ENCODE measurements at regions of chr15 and their contacts with region 1.

Region 1: GRCh38 chr15:51137880-51138430 is 43.2 kb upstream of the TNFAIP8L3 start:
- DNase-seq: no peak
- H3K4me3 ChIP-seq: no peak overlapping the region
- H3K27ac ChIP-seq: no peak overlapping the region
- H3K27me3 ChIP-seq: peaks cover 7% of the 10 kb centered on the region
- CTCF ChIP-seq: no peak

Region 2: GRCh38 chr15:51080286-51080685 is 57.7 kb before region 1 on chr15:
- CTCF ChIA-PET with region 1: interaction called, 7 read pairs
- POLR2A ChIA-PET with region 1: interaction called, 11 read pairs
- DNase-seq: no peak
- H3K4me3 ChIP-seq: no peak overlapping the region
- H3K27ac ChIP-seq: no peak overlapping the region
- H3K27me3 ChIP-seq: no peaks in the 10 kb centered on the region
- CTCF ChIP-seq: no peak

Region 3: GRCh38 chr15:52528991-52529926 is 1391.3 kb after region 1 on chr15:
- CTCF ChIA-PET with region 1: no interaction called
- POLR2A ChIA-PET with region 1: no interaction called
- DNase-seq: no peak
- H3K4me3 ChIP-seq: peak overlapping the region; percentile 77
- H3K27ac ChIP-seq: peak overlapping the region; percentile 57
- H3K27me3 ChIP-seq: peaks cover 2% of the 10 kb centered on the region
- CTCF ChIP-seq: no peak

Measured in AG04450 (cell line).